ENCODE measurements at regions of chrX and their contacts with region 1.

Region 1: DNA sequence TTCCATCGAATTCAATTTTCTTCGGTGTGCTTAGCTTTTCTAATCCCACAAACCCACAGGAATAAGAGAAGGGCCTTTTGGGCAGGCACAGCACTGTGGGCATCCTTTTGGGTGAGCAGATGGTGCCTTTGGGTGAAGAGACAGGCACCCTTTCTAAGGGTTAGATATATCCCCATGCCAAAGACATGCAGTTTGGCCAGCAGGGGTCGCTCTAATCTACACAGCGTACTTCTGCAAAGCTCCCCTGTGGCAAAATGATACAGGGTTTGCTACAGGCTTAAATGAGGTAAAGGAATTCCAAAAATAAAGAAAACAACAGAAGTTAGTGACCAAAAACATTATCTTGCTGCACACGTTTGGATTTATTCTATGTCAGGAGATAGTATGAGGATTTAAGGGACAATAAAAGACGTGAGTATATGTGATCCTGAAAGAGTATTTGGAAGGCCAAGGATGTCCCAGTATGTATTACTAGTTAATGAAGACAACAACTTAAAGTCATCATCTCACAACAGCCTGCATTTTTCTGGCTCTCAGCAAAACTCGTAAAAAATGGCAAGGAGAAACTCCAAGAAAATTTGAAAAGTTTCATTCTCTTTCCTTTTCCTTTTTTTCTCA is 49.5 kb downstream of the PHEX start:
- H3K4me3 ChIP-seq: no peak overlapping the region
- H3K27ac ChIP-seq: no peak overlapping the region
- H3K4me1 ChIP-seq: no peaks in the 10 kb centered on the region
- CTCF ChIP-seq: no peak

Region 2: DNA sequence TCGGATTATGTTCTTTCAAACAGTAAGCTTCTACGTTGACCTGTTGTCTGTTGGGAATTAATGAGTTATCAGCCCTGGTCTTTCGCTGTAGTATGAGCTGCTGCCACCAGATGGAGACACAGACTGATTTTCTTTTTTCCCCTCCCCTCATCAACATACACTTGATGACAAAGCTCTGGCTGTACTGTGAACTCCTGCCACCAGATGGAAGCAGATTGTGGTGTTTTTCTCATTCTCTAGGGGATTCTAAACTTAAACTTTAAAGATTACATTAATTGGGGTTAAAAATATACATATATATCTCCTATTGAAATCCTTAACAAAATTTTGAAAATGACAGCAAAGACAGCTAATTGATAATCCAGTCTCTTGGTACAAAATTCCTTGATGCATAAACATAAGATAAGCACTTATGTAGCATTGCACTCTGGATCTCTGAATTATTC is 96.2 kb before region 1 on chrX:
- CTCF ChIA-PET with region 1: interaction called, 12 read pairs
- POLR2A ChIA-PET with region 1: no interaction called
- H3K4me3 ChIP-seq: no peak overlapping the region
- H3K27ac ChIP-seq: no peak overlapping the region
- H3K4me1 ChIP-seq: no peaks in the 10 kb centered on the region
- CTCF ChIP-seq: peak; percentile 78

Region 3: DNA sequence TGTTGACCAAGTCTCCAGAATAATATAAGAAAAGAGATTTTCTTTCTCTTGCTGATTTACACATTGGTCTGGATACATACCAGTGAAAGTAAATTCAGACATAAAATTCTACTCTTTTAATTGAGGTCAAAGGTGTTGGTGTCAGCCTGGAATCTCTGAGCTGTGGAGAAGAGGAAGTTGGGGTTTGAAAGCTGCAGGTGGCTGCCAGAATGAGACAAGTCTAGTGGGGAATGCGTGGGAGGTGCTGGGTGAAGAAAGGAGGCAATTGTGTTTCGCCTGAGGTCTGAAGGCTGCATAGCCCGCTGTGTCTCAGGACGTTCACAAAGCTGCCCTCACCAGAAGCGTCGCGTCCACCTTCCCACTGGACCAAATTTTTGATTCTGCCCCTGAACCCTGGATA is 18.3 kb before region 1 on chrX:
- CTCF ChIA-PET with region 1: interaction called, 41 read pairs
- POLR2A ChIA-PET with region 1: no interaction called
- H3K4me3 ChIP-seq: no peak overlapping the region
- H3K27ac ChIP-seq: no peak overlapping the region
- H3K4me1 ChIP-seq: no peaks in the 10 kb centered on the region
- CTCF ChIP-seq: no peak

Region 4: DNA sequence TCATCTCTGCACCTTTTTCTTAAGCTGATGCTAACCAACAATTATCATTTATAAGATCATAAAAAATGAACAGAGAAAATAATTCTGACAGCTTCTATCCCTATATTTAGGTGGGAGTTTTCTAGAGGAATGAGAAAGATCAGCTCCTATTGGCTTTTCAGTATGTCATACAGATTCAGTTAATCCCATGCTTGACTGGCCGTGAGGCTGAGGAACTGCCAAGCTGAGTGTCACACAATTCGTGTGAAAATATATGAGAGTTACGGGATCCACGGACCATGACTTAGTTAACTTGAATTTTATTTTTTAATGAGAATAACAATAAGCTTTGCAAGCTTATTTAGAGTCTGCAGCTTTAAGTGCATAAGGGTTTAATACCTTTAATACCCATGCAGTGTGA is 12.0 kb before region 1 on chrX:
- CTCF ChIA-PET with region 1: interaction called, 41 read pairs
- POLR2A ChIA-PET with region 1: no interaction called
- H3K4me3 ChIP-seq: no peak overlapping the region
- H3K27ac ChIP-seq: no peak overlapping the region
- H3K4me1 ChIP-seq: no peaks in the 10 kb centered on the region
- CTCF ChIP-seq: no peak

Region 5: GRCh38 chrX:22095286-22095685 is 13.7 kb after region 1 on chrX:
- CTCF ChIA-PET with region 1: interaction called, 24 read pairs
- POLR2A ChIA-PET with region 1: no interaction called
- H3K4me3 ChIP-seq: no peak overlapping the region
- H3K27ac ChIP-seq: no peak overlapping the region; the same call in 1 of the 2 replicates
- H3K4me1 ChIP-seq: peaks cover 4% of the 10 kb centered on the region; the same call in 1 of the 2 replicates
- CTCF ChIP-seq: no peak

Region 6: DNA sequence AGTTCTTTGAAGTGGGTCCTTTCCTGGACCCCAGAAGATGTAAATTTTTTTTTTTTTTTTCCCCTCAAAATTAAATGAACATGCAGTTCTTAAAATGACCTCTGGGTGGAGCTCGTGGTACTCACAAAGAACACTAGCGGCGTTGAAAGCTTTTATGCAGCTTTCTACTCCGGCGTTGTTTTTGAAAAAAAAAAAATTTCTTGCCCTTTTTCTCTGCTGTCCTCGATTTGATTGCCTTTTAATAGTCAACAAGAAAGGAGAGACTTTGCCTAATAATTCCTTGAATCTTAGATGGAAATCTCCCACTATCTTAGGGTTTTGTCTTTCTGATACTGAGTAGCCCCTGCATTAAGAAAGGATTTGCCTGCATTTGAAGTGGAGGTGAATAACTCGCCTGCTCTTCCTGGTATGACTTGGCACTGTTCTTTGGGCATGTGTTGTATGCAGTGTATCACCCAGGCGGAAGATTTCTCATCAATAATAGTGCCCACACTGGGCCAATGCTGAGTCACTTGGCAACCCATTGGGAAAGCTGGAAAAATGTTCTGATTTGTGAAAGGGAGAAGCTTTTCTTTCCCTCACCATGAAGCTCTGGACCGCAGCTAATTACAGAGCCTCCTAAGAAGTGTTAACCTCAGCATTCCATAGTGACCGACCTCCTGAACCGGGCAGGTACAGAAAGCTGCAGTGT is 54.6 kb after region 1 on chrX:
- CTCF ChIA-PET with region 1: interaction called, 34 read pairs
- POLR2A ChIA-PET with region 1: no interaction called
- H3K4me3 ChIP-seq: no peak overlapping the region
- H3K27ac ChIP-seq: no peak overlapping the region; the same call in 1 of the 2 replicates
- H3K4me1 ChIP-seq: no peaks in the 10 kb centered on the region
- CTCF ChIP-seq: no peak

Measured in HEK293 (cell line).